Activated T-helper 2 cell treated with anti-CD3 and anti-CD28 coated beads, Interferon-gamma antibody, Interleukin-2, Interleukin-4, amounts not matched to agents 10 μg/mL and 5 μg/mL and 100 μg/mL, durations not matched to agents 14 hours and 24 hours and 36 hours (primary cell): ENCODE measurements at regions of chr12 and their contacts with region 1.

Region 1: DNA sequence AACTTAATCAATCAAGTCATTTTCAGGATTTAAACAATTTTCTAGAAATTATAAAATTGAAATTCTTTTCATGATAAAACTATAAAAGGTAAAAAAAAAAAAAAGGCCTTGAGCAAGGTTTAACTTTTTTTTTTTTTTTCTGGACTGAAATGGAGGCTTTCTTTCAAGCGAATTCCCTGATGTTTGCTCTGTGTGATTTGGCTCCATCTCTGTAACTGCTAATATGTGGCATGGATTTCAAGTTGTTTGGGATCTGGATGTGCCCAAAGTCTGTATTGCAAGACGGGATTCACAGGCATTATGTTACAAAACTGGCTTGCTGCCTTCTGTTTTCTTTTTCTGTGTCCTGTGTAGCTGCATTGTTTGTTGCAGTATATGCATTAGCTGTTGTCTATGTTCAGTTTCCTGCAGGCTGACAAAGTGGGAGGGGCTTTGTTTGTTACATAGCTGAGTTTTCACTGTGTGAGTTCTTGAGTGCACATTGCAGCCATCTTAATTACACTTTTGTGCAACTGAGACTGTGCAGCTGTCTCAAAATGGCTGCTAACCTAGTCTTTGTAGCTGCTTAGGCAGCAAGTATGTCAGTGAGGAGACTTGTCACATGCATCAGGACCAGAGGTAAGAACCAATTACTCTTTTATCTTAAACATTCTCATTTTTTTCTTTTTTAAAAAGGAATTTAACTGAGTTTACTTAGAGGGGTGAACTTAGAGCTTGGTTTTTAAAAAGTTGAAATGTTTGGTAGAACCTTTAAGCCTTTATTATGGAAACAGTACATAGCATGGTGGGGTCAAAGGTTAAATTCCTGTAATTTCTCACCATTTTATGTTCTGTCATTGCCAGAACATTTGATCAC is 19.5 kb downstream of the ATF7IP start:
- DNase-seq: peak; percentile 72
- H3K4me3 Mint-ChIP-seq: peak overlapping the region; percentile 87
- H3K27ac Mint-ChIP-seq: peak overlapping the region; percentile 86
- H3K4me1 Mint-ChIP-seq: peaks cover 45% of the 10 kb centered on the region
- H3K27me3 Mint-ChIP-seq: no peaks in the 10 kb centered on the region

Region 2: DNA sequence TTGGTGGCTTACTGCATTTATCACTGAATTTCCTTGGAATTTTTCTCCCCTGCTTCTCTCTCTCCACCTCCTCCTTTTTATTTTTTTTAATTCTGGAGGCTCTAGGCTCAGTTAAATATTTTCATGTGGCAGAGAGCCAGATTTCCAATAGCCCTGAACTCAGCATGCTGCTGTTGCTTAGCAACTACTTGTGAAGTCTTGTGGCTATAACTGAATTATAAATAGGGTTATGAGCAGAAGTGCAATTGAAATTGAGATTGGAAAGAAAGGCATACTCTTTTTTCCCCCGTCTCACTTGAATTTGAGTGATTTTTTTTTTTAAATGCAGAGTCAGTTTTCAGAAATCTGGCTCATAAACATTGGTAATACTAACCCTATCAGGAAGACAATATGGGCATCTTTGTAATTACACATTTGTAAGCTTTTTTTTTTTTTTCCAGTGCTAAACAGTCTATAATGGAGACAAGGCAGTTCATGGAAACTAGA is 18.7 kb after region 1 on chr12:
- intact Hi-C with region 1: loop called (anchors 2 kb)
- DNase-seq: no peak
- H3K4me3 Mint-ChIP-seq: peak overlapping the region; percentile 43
- H3K27ac Mint-ChIP-seq: peak overlapping the region; percentile 67
- H3K4me1 Mint-ChIP-seq: peaks cover 57% of the 10 kb centered on the region
- H3K27me3 Mint-ChIP-seq: no peaks in the 10 kb centered on the region

Region 3: GRCh38 chr12:14417715-14418114 is 32.7 kb after region 1 on chr12:
- intact Hi-C with region 1: loop called (anchors 1 kb)
- DNase-seq: peak; percentile 64
- H3K4me3 Mint-ChIP-seq: peak overlapping the region; percentile 77
- H3K27ac Mint-ChIP-seq: peak overlapping the region; percentile 92
- H3K4me1 Mint-ChIP-seq: peaks cover 42% of the 10 kb centered on the region
- H3K27me3 Mint-ChIP-seq: no peaks in the 10 kb centered on the region

Region 4: GRCh38 chr12:14960548-14961465 is 575.8 kb after region 1 on chr12:
- intact Hi-C with region 1: loop called (anchors 5 kb)
- DNase-seq: peak; percentile 43
- H3K4me3 Mint-ChIP-seq: peak overlapping the region; percentile 96
- H3K27ac Mint-ChIP-seq: peak overlapping the region; percentile 97
- H3K4me1 Mint-ChIP-seq: peaks cover 58% of the 10 kb centered on the region
- H3K27me3 Mint-ChIP-seq: no peaks in the 10 kb centered on the region